ENCODE measurements at regions of chr11 and their contacts with region 1.

Region 1: DNA sequence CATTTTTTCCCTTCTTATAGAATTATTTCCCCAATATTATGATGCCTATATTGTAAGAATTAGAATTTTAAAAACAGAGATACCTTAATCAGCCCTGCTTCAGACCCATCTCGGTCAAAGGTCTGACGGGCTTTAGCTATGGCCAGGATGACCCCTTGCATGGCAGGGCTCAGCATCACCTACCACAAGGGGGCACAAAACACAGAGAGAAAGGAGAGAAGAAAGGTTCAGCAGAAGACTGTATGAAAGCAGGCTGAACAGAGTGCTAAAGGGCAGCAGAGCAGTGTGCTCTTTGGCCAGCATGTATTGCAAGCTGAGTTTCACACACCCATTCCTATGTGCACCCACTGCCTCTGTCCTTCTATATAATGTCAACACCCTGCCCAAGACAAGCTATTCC is 26.8 kb downstream of the CLDN25 start:
- DNase-seq: peak; percentile 56
- ATAC-seq: peak; percentile 70
- H3K4me3 ChIP-seq: no peak overlapping the region
- H3K4me3 Mint-ChIP-seq: no peak overlapping the region
- H3K27ac ChIP-seq: no peak overlapping the region
- H3K27ac Mint-ChIP-seq: peak overlapping the region; percentile 77
- H3K4me1 ChIP-seq: no peaks in the 10 kb centered on the region
- H3K4me1 Mint-ChIP-seq: peaks cover 4% of the 10 kb centered on the region
- H3K27me3 ChIP-seq: no peaks in the 10 kb centered on the region
- H3K27me3 Mint-ChIP-seq: no peaks in the 10 kb centered on the region
- CTCF ChIP-seq: peak; percentile 58

Region 2: DNA sequence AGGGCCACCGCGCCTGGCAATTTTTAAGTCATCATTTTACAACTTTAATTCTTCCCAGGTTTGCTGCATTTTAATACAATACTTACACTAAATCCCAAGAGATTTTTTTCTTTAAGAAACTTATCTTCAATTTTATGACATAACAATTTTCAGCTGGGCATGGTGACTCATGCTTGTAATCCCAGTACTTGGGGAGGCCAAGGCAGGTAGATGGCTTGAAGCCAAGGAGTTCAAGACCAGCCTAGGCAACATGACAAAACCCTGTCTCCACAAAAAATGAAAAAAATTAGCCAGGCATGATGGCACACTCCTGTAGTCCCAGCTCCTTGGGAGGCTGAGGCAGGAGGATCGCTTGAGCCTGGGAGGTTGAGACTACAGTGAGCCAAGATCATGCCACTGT is 12.0 kb after region 1 on chr11:
- CTCF ChIA-PET with region 1: interaction called, 14 read pairs
- POLR2A ChIA-PET with region 1: no interaction called
- intact Hi-C with region 1: no loop called
- DNase-seq: no peak
- ATAC-seq: no peak
- H3K4me3 ChIP-seq: no peak overlapping the region
- H3K4me3 Mint-ChIP-seq: no peak overlapping the region
- H3K27ac ChIP-seq: no peak overlapping the region
- H3K27ac Mint-ChIP-seq: no peak overlapping the region
- H3K4me1 ChIP-seq: no peaks in the 10 kb centered on the region
- H3K4me1 Mint-ChIP-seq: no peaks in the 10 kb centered on the region
- H3K27me3 ChIP-seq: no peaks in the 10 kb centered on the region
- H3K27me3 Mint-ChIP-seq: no peaks in the 10 kb centered on the region
- CTCF ChIP-seq: no peak

Region 3: GRCh38 chr11:113831314-113831713 is 24.9 kb after region 1 on chr11:
- CTCF ChIA-PET with region 1: interaction called, 15 read pairs
- POLR2A ChIA-PET with region 1: no interaction called
- intact Hi-C with region 1: no loop called
- DNase-seq: peak; percentile 52
- ATAC-seq: peak; percentile 86
- H3K4me3 ChIP-seq: peak overlapping the region in 2 of 5 experiments; percentile 12 to 18
- H3K4me3 Mint-ChIP-seq: peak overlapping the region; percentile 78
- H3K27ac ChIP-seq: peak overlapping the region; percentile 36 to 65
- H3K27ac Mint-ChIP-seq: peak overlapping the region; percentile 86
- H3K4me1 ChIP-seq: peaks cover 15 to 19% of the 10 kb centered on the region in 2 donors
- H3K4me1 Mint-ChIP-seq: peaks cover 24% of the 10 kb centered on the region
- H3K27me3 ChIP-seq: no peaks in the 10 kb centered on the region
- H3K27me3 Mint-ChIP-seq: no peaks in the 10 kb centered on the region
- CTCF ChIP-seq: no peak

Region 4: GRCh38 chr11:113839842-113840241 is 33.4 kb after region 1 on chr11:
- CTCF ChIA-PET with region 1: interaction called, 13 read pairs
- POLR2A ChIA-PET with region 1: no interaction called
- intact Hi-C with region 1: loop called (anchors 5 kb)
- DNase-seq: peak; percentile 85
- ATAC-seq: peak; percentile 93
- H3K4me3 ChIP-seq: peak overlapping the region in 1 of 5 experiments; percentile 52
- H3K4me3 Mint-ChIP-seq: peak overlapping the region; percentile 78
- H3K27ac ChIP-seq: peak overlapping the region; percentile 92
- H3K27ac Mint-ChIP-seq: peak overlapping the region; percentile 94
- H3K4me1 ChIP-seq: peaks cover 39 to 43% of the 10 kb centered on the region in 2 donors
- H3K4me1 Mint-ChIP-seq: peaks cover 30% of the 10 kb centered on the region
- H3K27me3 ChIP-seq: no peaks in the 10 kb centered on the region
- H3K27me3 Mint-ChIP-seq: no peaks in the 10 kb centered on the region
- CTCF ChIP-seq: no peak

Region 5: DNA sequence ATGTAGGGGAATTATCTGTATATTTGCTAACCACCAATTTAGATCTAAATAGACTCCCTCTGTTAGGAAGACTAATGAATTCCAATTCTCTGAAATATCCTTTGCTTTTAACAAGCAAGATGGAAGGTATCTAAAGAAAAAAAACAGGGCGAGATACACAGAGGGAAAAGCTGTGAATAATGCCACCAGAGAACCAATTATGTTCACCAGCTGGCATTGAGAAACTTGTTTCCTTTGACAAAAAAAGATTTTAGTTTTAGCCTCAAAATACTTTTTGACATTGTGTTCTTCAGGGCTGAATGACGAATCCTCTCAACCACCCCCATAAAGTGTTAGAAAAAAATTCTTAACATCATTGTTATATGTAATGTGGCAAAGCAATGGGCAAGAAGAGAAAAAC is 117.2 kb after region 1 on chr11:
- CTCF ChIA-PET with region 1: no interaction called
- POLR2A ChIA-PET with region 1: no interaction called
- intact Hi-C with region 1: no loop called
- DNase-seq: no peak
- ATAC-seq: no peak
- H3K4me3 ChIP-seq: no peak overlapping the region
- H3K4me3 Mint-ChIP-seq: no peak overlapping the region
- H3K27ac ChIP-seq: no peak overlapping the region
- H3K27ac Mint-ChIP-seq: no peak overlapping the region
- H3K4me1 ChIP-seq: no peaks in the 10 kb centered on the region
- H3K4me1 Mint-ChIP-seq: peaks cover 3% of the 10 kb centered on the region
- H3K27me3 ChIP-seq: no peaks in the 10 kb centered on the region
- H3K27me3 Mint-ChIP-seq: peaks cover 13% of the 10 kb centered on the region
- CTCF ChIP-seq: no peak